MCF 10A (cell line): ENCODE measurements at regions of chr10 and their contacts with region 1.

Region 1: DNA sequence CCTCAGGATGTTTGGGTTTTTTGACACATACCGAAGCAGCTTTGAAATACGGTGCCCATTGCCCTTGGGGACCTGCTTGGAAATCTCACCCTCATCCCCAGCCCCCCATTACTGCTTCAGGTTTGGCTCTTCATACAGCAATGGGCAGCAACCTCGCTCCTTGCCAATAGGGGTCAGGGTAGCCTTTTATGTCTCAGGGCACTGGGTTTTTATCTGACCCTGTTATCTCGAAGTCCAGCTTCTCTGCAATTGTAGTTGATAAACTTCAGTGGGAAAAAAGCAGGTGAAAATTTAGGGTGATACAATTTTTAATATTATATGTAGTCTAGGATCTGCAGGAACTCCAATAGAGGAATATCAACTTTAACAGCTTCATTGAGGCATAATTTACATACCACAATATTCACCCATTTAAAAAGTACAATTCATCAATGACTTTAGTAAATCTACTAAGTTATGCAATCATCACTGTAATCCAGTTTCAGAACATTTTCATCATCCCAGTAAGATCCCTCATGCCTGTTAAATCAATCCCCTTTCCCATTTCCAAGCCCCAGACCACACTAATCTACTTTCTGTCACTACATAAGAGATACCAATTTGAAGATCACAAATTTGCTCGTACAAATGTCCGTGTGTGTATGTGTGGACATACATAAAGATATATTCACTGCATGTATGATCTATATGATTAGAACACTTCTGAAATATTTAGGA is 386.2 kb downstream of the KCNMA1 start:
- DNase-seq: peak; percentile 50
- H3K4me3 Mint-ChIP-seq: no peak overlapping the region
- H3K27ac Mint-ChIP-seq: no peak overlapping the region
- H3K4me1 Mint-ChIP-seq: peaks cover 13% of the 10 kb centered on the region
- H3K27me3 Mint-ChIP-seq: no peaks in the 10 kb centered on the region
- CTCF ChIP-seq: peak; percentile 86

Region 2: GRCh38 chr10:77165445-77166208 is 85.8 kb before region 1 on chr10:
- CTCF ChIA-PET with region 1: interaction called, 4 read pairs
- POLR2A ChIA-PET with region 1: interaction called, 3 read pairs
- intact Hi-C with region 1: loop called (anchors 5 kb)
- DNase-seq: peak; percentile 79
- H3K4me3 Mint-ChIP-seq: no peak overlapping the region
- H3K27ac Mint-ChIP-seq: peak overlapping the region; percentile 81
- H3K4me1 Mint-ChIP-seq: peaks cover 37% of the 10 kb centered on the region
- H3K27me3 Mint-ChIP-seq: no peaks in the 10 kb centered on the region
- CTCF ChIP-seq: peak; percentile 77

Region 3: DNA sequence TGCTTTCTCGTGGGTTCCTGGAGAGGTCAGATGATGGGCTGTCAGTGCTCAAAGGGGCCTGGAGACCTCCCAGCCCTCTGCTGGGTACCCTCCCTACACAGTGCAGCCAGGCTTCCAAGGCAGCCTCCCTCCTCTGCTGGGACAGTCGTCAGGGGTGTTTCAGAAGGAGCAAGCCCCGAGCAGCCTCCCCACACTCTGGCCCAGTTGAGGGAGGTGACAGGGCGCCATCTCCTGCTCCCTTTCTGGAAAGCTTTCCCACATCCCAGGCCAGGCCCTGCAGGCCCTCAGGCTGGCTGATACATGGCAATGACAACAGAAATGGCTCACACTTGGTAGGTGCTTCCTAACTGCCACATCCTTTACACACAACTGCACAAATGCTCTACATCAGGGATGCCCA is 354.0 kb after region 1 on chr10:
- CTCF ChIA-PET with region 1: interaction called, 3 read pairs
- POLR2A ChIA-PET with region 1: no interaction called
- intact Hi-C with region 1: loop called (anchors 1 kb)
- DNase-seq: peak; percentile 35
- H3K4me3 Mint-ChIP-seq: no peak overlapping the region
- H3K27ac Mint-ChIP-seq: no peak overlapping the region
- H3K4me1 Mint-ChIP-seq: peaks cover 28% of the 10 kb centered on the region
- H3K27me3 Mint-ChIP-seq: no peaks in the 10 kb centered on the region
- CTCF ChIP-seq: peak; percentile 27